Heart right ventricle (tissue), 16 donors: ENCODE measurements at regions of chr6 and their contacts with region 1.

Region 1: GRCh38 chr6:108068618-108069017 is 5.9 kb downstream of the OSTM1 start:
- DNase-seq: no peak
- ATAC-seq: no peak
- H3K4me3 ChIP-seq: no peak overlapping the region
- H3K27ac ChIP-seq: no peak overlapping the region
- H3K4me1 ChIP-seq: peaks cover 0 to 10% (median 5%) of the 10 kb centered on the region in 9 donors
- H3K27me3 ChIP-seq: no peaks in the 10 kb centered on the region
- CTCF ChIP-seq: no peak

Region 2: GRCh38 chr6:107977283-107977682 is 91.3 kb before region 1 on chr6:
- intact Hi-C with region 1: loop called in 1 of 10 experiments (anchors 5 kb)
- DNase-seq: no peak
- ATAC-seq: no peak
- H3K4me3 ChIP-seq: no peak overlapping the region
- H3K27ac ChIP-seq: no peak overlapping the region
- H3K4me1 ChIP-seq: no peaks in the 10 kb centered on the region
- H3K27me3 ChIP-seq: no peaks in the 10 kb centered on the region
- CTCF ChIP-seq: peak in 7 of 9 donors; percentile 26 to 52 (median 39)